ENCODE measurements at regions of chr6 and their contacts with region 1.

Region 1: GRCh38 chr6:107114213-107114905 is 956 bp downstream of the BEND3 start:
- DNase-seq: peak; percentile 66 to 83
- ATAC-seq: peak; percentile 87 to 88
- H3K4me3 ChIP-seq: peak overlapping the region; percentile 68 to 88 (median 72)
- H3K27ac ChIP-seq: peak overlapping the region; percentile 70 to 80 (median 80)
- H3K4me1 ChIP-seq: peaks cover 5 to 14% of the 10 kb centered on the region in 2 donors
- H3K27me3 ChIP-seq: no peaks in the 10 kb centered on the region
- CTCF ChIP-seq: peak in 4 of 5 experiments; percentile 88 to 97 (median 96)
- POLR2A ChIP-seq: no peak

Region 2: DNA sequence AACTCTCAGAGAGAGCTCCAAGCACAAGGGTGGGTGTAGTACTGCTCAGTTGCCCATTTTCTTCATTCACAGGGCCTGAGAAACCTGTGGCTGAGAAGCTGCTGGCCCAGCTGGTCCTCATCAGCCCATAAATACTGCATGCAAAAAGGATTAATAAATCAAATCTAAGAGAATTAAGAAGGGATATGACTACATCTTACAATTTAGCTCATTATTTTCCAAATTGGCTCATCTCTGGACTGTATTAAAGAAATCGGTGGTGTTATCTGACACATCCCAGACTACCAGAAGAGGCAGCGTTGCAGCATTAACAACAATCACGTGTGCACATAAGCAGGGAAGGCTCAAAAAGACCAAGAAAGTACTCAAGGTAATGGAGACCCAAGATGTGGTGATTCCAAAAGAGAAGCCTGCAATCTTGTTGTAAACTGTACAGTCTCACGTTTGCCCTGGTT is 230.5 kb before region 1 on chr6:
- in situ Hi-C with region 1: no loop called
- intact Hi-C with region 1: no loop called
- DNase-seq: no peak
- ATAC-seq: no peak
- H3K4me3 ChIP-seq: no peak overlapping the region
- H3K27ac ChIP-seq: no peak overlapping the region
- H3K4me1 ChIP-seq: no peaks in the 10 kb centered on the region
- H3K27me3 ChIP-seq: no peaks in the 10 kb centered on the region
- CTCF ChIP-seq: no peak
- POLR2A ChIP-seq: no peak

Region 3: GRCh38 chr6:107021446-107022185 is 92.7 kb before region 1 on chr6:
- in situ Hi-C with region 1: loop called in 1 of 4 experiments (anchors 10 kb)
- intact Hi-C with region 1: no loop called
- DNase-seq: no peak
- ATAC-seq: no peak
- H3K4me3 ChIP-seq: no peak overlapping the region
- H3K27ac ChIP-seq: no peak overlapping the region
- H3K4me1 ChIP-seq: no peaks in the 10 kb centered on the region
- H3K27me3 ChIP-seq: no peaks in the 10 kb centered on the region
- CTCF ChIP-seq: no peak
- POLR2A ChIP-seq: no peak

Region 4: DNA sequence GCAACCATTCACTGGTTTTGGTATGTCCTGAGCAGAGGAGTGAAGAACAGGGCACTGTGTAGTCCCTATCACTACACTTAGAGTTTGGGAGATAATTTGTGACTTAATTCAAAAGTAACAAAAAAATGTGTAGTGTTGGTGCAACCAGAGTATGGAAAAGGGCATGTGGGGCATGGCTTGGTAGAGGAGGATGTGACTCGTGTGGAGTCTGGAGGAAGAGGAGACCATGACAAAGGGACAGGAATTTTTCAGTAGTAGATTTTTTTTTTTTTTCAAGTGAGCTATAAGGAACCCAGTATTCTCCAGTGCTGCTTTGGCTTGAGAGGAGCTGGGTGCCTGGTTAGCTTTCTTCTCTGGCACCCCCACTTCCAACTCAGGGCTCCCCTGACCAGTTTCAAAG is 81.2 kb before region 1 on chr6:
- in situ Hi-C with region 1: loop called in 1 of 4 experiments (anchors 10 kb)
- intact Hi-C with region 1: loop called (anchors 1 kb)
- DNase-seq: no peak
- ATAC-seq: no peak
- H3K4me3 ChIP-seq: no peak overlapping the region
- H3K27ac ChIP-seq: no peak overlapping the region
- H3K4me1 ChIP-seq: peaks cover 10 to 21% of the 10 kb centered on the region in 2 donors
- H3K27me3 ChIP-seq: no peaks in the 10 kb centered on the region
- CTCF ChIP-seq: no peak
- POLR2A ChIP-seq: no peak

Region 5: DNA sequence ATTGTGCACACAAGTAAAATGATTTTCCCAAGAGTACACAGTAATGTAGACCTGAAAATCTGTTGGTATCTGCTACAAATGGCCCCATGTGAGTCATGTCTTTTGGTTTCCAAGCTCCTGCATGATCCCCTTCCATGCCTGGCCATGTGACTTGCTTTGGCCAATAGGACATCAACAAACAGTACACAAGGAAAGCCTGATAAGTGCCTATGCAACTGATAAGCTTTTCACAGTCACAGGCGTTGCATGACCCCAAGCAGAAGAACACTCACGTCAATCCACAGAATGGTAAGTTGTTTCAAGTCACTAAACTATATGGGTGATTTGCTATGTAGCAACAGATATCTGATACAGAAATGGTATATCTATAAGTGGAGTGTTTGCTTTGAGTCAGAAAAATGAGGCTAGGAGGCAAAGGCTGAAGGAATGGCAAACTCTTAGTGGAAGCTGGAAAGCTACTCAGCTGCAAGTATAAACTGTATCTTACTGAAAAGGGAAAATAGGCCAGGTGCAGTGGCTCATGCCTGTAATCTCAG is 161.0 kb after region 1 on chr6:
- in situ Hi-C with region 1: no loop called
- intact Hi-C with region 1: no loop called
- DNase-seq: no peak
- ATAC-seq: no peak
- H3K4me3 ChIP-seq: no peak overlapping the region
- H3K27ac ChIP-seq: no peak overlapping the region
- H3K4me1 ChIP-seq: peaks cover 0 to 10% of the 10 kb centered on the region in 2 donors
- H3K27me3 ChIP-seq: no peaks in the 10 kb centered on the region
- CTCF ChIP-seq: no peak
- POLR2A ChIP-seq: no peak

Region 6: GRCh38 chr6:107459283-107460082 is 345.1 kb after region 1 on chr6 and contains the start of gene PDSS2:
- in situ Hi-C with region 1: no loop called
- intact Hi-C with region 1: loop called (anchors 10 kb)
- DNase-seq: peak; percentile 97 to 99
- ATAC-seq: peak; percentile 94 to 98
- H3K4me3 ChIP-seq: peak within 1 kb of the TSS; percentile 79 to 89 (median 82)
- H3K27ac ChIP-seq: peak within 1 kb of the TSS; percentile 92 to 98 (median 94)
- H3K4me1 ChIP-seq: peaks cover 12 to 17% of the 10 kb centered on the region in 2 donors
- H3K27me3 ChIP-seq: no peaks in the 10 kb centered on the region
- CTCF ChIP-seq: peak in 3 of 5 experiments; percentile 7 to 35 (median 8)
- POLR2A ChIP-seq: peak; percentile 81 to 90
- total RNA-seq, gene PDSS2: 6.6 to 14.3 (median 10.0) TPM

Measured in gastrocnemius medialis (tissue), 4 donors.